Endothelial cell of umbilical vein (primary cell): ENCODE measurements at regions of chr20 and their contacts with region 1.

Region 1: GRCh38 chr20:41329435-41330342 is 10.9 kb upstream of the LPIN3 start:
- DNase-seq: peak; percentile 94
- H3K4me3 ChIP-seq: no peak overlapping the region
- H3K27ac ChIP-seq: peak overlapping the region; percentile 89
- H3K4me1 ChIP-seq: peaks cover 20% of the 10 kb centered on the region
- H3K27me3 ChIP-seq: no peaks in the 10 kb centered on the region
- CTCF ChIP-seq: no peak
- POLR2A ChIP-seq: peak; percentile 66

Region 2: DNA sequence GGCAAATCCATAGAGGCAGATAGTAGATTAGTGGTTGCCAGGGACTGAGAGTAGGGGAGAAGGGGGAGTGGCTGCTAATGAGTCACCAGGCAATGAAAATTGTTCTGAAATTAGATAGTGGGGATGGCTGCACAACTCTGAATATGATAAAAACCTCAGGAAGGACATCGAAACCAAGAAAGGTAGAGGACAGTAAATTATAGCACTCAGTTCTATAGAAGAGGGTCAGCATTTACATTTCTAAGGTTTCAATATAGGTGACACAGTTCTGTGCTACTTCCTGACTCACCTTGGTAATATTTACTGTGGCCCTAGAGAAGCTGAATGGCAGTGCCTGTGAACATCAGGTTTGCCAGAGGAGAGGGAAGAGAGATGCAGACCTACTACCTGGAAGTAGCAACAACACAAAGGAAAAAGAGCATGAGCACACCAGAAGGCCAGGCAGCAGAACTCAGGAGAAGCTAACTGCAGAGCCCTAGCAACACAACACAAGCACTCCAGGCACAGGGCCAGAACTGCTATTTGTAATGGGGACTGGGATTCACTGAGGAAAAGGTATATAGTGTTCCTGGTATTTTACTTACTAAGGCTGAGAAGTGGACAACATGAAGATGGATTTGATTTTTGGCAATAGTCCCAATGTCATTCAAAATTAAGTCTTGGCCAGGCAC is 116.4 kb before region 1 on chr20:
- CTCF ChIA-PET with region 1: no interaction called
- POLR2A ChIA-PET with region 1: no interaction called
- dilution Hi-C with region 1: no loop called
- intact Hi-C with region 1: no loop called
- DNase-seq: peak; percentile 22
- H3K4me3 ChIP-seq: no peak overlapping the region
- H3K27ac ChIP-seq: no peak overlapping the region
- H3K4me1 ChIP-seq: peaks cover 3% of the 10 kb centered on the region
- H3K27me3 ChIP-seq: no peaks in the 10 kb centered on the region
- CTCF ChIP-seq: no peak
- POLR2A ChIP-seq: no peak

Region 3: DNA sequence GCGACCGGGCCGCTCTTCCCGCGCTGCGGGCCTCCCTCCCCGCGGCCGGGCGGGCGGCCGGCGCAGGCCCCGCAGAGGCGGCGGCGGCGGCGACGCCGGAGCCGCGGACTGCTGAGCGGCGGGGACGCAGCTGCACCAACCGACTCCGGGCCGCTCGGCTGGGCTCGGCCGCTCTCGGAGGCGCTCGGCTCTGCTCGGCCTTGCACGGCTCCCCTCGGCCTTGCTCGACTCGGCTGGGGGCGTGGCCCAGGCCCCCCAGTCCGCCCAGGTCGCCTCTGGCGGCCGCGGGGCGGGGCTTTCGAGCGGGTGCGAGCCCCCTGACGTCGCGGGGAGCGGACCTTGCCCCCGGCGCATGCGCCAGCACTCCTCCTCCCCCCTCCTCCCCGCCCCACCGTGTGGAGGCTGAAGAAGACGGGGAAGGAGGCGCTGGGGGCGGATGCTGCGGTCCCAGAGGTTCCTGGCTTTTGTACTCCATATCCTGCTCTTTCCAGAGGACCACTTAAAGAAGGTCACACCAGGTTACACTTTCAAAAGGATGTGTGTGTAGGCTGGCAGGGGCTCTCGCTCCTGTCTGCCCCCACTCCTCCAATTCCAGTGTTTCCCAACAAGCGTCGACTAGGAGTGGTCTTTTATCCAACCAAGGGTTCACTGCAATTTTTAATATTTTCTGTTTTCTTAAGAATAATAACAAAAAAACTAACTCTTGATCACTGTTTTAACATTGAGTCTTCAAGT is 12.0 kb before region 1 on chr20 and contains the start of gene ZHX3:
- CTCF ChIA-PET with region 1: interaction called, 14 read pairs
- POLR2A ChIA-PET with region 1: interaction called, 6 read pairs
- dilution Hi-C with region 1: no loop called
- intact Hi-C with region 1: loop called (anchors 1 kb)
- DNase-seq: peak; percentile 97
- H3K4me3 ChIP-seq: peak within 1 kb of the TSS; percentile 76 to 87 (median 79)
- H3K27ac ChIP-seq: peak within 1 kb of the TSS; percentile 70
- H3K4me1 ChIP-seq: peaks cover 18% of the 10 kb centered on the region
- H3K27me3 ChIP-seq: no peaks in the 10 kb centered on the region
- CTCF ChIP-seq: no peak
- POLR2A ChIP-seq: peak; percentile 82
- total RNA-seq, gene ZHX3: 15.1 and 17.8 TPM in 2 replicates